IMR-90 (cell line): ENCODE measurements at regions of chr2 and their contacts with region 1.

Region 1: GRCh38 chr2:157628477-157629415 is at the start of gene ACVR1C:
- DNase-seq: peak; percentile 37
- ATAC-seq: peak; percentile 95
- H3K4me3 ChIP-seq: peak within 1 kb of the TSS; percentile 56
- H3K27ac ChIP-seq: no peak within 1 kb of the TSS
- H3K4me1 ChIP-seq: peaks cover 4% of the 10 kb centered on the region
- H3K27me3 ChIP-seq: peaks cover 12% of the 10 kb centered on the region
- CTCF ChIP-seq: peak; percentile 44
- POLR2A ChIP-seq: no peak
- RAD21 ChIP-seq: peak; percentile 38; the same call in 1 of the 2 replicates
- total RNA-seq, gene ACVR1C: 0.18 and 0.28 TPM in 2 replicates

Region 2: GRCh38 chr2:157443795-157444640 is 184.7 kb before region 1 on chr2 and contains the start of gene CYTIP:
- CTCF ChIA-PET with region 1: no interaction called
- POLR2A ChIA-PET with region 1: no interaction called
- dilution Hi-C with region 1: no loop called
- in situ Hi-C with region 1: no loop called
- intact Hi-C with region 1: no loop called
- DNase-seq: no peak
- ATAC-seq: no peak
- H3K4me3 ChIP-seq: no peak within 1 kb of the TSS
- H3K27ac ChIP-seq: no peak within 1 kb of the TSS
- H3K4me1 ChIP-seq: no peaks in the 10 kb centered on the region
- H3K27me3 ChIP-seq: peaks cover 1% of the 10 kb centered on the region; the same call in 1 of the 2 replicates
- CTCF ChIP-seq: no peak
- POLR2A ChIP-seq: no peak
- RAD21 ChIP-seq: no peak
- total RNA-seq, gene CYTIP: not detected in 2 replicates

Region 3: DNA sequence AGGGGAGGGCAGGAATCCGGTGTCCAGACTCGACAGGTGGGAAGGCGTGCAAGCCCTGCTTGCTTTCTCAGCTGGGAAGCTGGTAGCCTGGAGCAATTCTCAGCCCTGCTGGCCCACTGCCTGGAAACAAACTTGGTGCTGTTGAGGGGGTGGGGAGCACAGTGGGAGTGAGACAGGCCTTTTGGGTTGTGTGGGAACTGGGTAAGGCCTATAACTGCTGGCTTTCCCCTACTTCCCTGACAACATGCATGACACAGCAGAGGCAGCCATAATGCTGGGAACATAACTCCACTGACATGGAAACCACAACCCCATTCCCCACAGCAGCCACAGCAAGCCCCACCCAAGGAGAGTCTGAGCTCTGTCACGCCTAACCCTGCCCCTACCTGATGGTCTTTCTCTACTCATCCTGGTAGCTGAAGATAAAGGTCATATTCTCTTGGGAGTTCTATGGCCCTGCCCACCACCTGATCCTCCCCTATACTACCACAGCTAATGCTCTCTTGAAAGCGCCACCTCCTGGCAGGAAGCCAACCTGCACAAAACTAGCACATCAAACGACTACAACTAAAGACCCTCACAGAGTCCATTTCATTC is 122.8 kb after region 1 on chr2:
- CTCF ChIA-PET with region 1: no interaction called
- POLR2A ChIA-PET with region 1: no interaction called
- dilution Hi-C with region 1: no loop called
- in situ Hi-C with region 1: no loop called
- intact Hi-C with region 1: loop called (anchors 5 kb)
- DNase-seq: peak; percentile 57
- ATAC-seq: no peak
- H3K4me3 ChIP-seq: no peak overlapping the region
- H3K27ac ChIP-seq: no peak overlapping the region
- H3K4me1 ChIP-seq: peaks cover 4% of the 10 kb centered on the region
- H3K27me3 ChIP-seq: no peaks in the 10 kb centered on the region
- CTCF ChIP-seq: no peak
- POLR2A ChIP-seq: no peak
- RAD21 ChIP-seq: no peak

Region 4: DNA sequence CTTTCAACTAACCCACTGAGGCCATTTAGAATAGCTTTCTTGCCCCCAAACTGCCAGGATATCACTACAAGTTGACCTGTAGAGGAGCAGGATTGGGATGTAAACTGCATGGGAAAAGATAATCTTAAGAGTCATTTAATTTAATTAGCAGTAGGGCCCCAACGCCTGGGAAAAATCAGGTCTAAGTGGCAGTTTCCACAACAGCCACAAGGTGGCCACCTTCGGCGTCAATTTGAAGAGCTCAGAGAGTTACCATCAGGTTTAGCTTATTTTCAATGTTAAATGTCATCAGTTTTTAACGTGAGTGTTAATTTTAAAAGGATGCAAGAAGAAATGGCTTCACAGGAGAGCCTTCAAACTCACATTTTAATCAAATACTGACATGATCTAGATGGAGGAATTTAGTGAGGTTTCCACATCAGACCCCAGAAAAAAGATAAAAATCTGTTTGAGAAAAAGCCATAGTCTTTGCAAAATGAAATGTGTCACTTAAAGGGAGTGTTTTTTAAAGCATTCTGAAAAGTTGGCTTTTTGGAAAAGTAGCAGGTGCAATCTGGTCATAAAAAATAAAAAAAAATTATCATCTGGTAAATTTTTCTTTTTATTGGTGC is 395.6 kb after region 1 on chr2:
- CTCF ChIA-PET with region 1: no interaction called
- POLR2A ChIA-PET with region 1: no interaction called
- dilution Hi-C with region 1: no loop called
- in situ Hi-C with region 1: loop called (anchors 25 kb)
- intact Hi-C with region 1: no loop called
- DNase-seq: peak; percentile 31
- ATAC-seq: peak; percentile 76
- H3K4me3 ChIP-seq: no peak overlapping the region
- H3K27ac ChIP-seq: no peak overlapping the region
- H3K4me1 ChIP-seq: peaks cover 2% of the 10 kb centered on the region; the same call in 1 of the 2 replicates
- H3K27me3 ChIP-seq: peaks cover 6% of the 10 kb centered on the region; the same call in 1 of the 2 replicates
- CTCF ChIP-seq: peak; percentile 82
- POLR2A ChIP-seq: no peak
- RAD21 ChIP-seq: peak; percentile 70